Ascending aorta (tissue), 2 donors: ENCODE measurements at regions of chr6 and their contacts with region 1.

Region 1: GRCh38 chr6:110053395-110054240 is 75.5 kb downstream of the GPR6 start:
- DNase-seq: no peak
- H3K4me3 ChIP-seq: no peak overlapping the region
- H3K27ac ChIP-seq: no peak overlapping the region
- H3K4me1 ChIP-seq: no peaks in the 10 kb centered on the region
- H3K27me3 ChIP-seq: no peaks in the 10 kb centered on the region
- CTCF ChIP-seq: peak; percentile 30 to 76 (median 65)

Region 2: DNA sequence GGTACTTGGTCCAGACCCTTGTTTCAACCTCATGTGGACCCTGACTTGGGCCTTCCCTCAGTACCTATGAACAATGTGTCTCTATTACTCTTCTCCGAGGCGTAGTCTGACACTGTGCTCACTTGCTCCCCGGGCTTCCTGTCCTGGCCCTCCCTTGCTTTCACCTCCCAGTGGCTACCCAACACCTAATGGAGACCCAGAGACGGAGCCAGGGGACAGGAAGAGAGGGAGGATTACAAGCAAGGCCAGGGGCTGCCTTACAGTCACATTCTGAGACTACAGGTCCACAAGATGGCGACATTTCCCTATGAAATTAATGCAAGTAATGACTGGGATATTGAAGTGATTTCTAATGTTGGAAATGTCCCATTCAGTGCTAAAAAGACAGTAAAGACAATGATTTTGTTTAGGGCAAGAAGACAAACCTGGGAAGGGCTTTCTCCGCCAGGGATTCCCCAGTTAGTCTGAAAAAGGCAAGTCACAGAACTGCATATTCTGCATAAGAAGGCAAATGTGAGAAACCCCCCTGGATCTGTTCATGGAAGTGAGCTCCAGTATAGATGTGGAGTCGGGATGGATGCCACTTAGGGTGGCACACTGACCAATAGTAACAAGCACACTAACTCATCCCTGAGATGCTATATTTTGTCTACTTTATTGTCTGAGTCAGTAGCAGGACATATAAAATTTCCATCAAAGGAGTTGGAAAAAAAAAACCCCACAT is 526.6 kb before region 1 on chr6:
- intact Hi-C with region 1: loop called (anchors 5 kb)
- DNase-seq: no peak
- H3K4me3 ChIP-seq: no peak overlapping the region
- H3K27ac ChIP-seq: no peak overlapping the region
- H3K4me1 ChIP-seq: no peaks in the 10 kb centered on the region
- H3K27me3 ChIP-seq: no peaks in the 10 kb centered on the region
- CTCF ChIP-seq: peak; percentile 30 to 57 (median 40)

Region 3: GRCh38 chr6:109705258-109705657 is 348.4 kb before region 1 on chr6:
- intact Hi-C with region 1: loop called (anchors 5 kb)
- DNase-seq: peak in 1 of 2 donors; percentile 86
- H3K4me3 ChIP-seq: no peak overlapping the region
- H3K27ac ChIP-seq: no peak overlapping the region
- H3K4me1 ChIP-seq: no peaks in the 10 kb centered on the region
- H3K27me3 ChIP-seq: no peaks in the 10 kb centered on the region
- CTCF ChIP-seq: peak; percentile 90 to 98 (median 95)

Region 4: GRCh38 chr6:110398778-110399177 is 345.2 kb after region 1 on chr6:
- intact Hi-C with region 1: loop called (anchors 10 kb)
- DNase-seq: no peak
- H3K4me3 ChIP-seq: no peak overlapping the region
- H3K27ac ChIP-seq: no peak overlapping the region
- H3K4me1 ChIP-seq: no peaks in the 10 kb centered on the region
- H3K27me3 ChIP-seq: no peaks in the 10 kb centered on the region
- CTCF ChIP-seq: no peak